CD4-positive, alpha-beta memory T cell (primary cell): ENCODE measurements at regions of chr20 and their contacts with region 1.

Region 1: DNA sequence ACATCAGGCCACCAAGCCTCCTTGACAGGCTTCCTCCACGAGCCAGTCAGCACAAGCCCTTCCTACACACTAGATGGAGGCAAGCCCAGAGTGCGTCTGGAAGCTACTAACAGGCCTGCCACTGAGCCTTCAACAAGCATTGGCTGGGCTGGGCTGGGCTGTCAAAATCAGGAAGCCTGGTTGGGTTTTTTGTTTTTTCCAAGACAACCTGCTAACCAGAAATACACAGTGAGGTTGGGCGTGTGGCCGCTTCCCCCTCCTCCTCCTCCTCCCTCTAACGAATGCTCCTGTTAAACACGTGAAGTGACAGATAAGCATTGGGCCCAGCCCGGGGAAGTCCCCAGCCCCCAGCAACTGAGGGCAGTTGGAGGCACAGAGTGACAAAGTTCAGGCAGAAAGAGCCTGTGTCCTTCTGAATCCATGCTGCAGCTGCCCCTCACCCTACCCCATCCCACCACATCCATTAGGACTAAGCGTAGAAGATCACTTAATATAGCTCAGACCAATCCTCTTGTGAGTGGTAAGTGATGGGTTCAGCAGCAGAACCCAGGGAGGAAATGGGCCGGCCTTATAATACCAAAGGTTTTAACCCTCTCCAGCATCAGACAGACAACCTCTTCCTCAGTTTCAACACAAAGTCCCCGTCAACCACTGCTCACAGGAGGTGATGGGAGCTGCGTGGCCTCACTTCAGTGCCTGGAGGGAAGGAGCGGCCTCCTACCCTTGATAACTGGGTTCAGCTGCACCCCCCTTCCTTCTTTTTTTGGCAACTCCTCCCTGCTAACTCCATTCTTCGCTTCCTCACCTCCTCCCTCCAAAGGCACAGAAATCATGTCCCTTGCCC is 1.1 kb downstream of the NFATC2 start:
- DNase-seq: peak; percentile 88 to 98 (median 91)
- H3K4me3 ChIP-seq: peak overlapping the region; percentile 72 to 85
- H3K4me3 Mint-ChIP-seq: peak overlapping the region; percentile 95 to 99 (median 98)
- H3K27ac ChIP-seq: peak overlapping the region; percentile 98
- H3K27ac Mint-ChIP-seq: peak overlapping the region; percentile 97 to 100 (median 98)
- H3K4me1 ChIP-seq: peaks cover 55% of the 10 kb centered on the region
- H3K4me1 Mint-ChIP-seq: peaks cover 43 to 65% (median 52%) of the 10 kb centered on the region in 4 donors
- H3K27me3 ChIP-seq: no peaks in the 10 kb centered on the region
- H3K27me3 Mint-ChIP-seq: no peaks in the 10 kb centered on the region

Region 2: GRCh38 chr20:51404298-51405060 is 136.9 kb before region 1 on chr20:
- CTCF ChIA-PET with region 1: interaction called, 8 read pairs
- POLR2A ChIA-PET with region 1: interaction called, 58 read pairs
- intact Hi-C with region 1: loop called (anchors 1 kb)
- DNase-seq: peak; percentile 86 to 98 (median 90)
- H3K4me3 ChIP-seq: no peak overlapping the region
- H3K4me3 Mint-ChIP-seq: peak overlapping the region in 7 of 8 donors; percentile 43 to 94 (median 78)
- H3K27ac ChIP-seq: peak overlapping the region; percentile 96
- H3K27ac Mint-ChIP-seq: peak overlapping the region; percentile 99 to 100 (median 100)
- H3K4me1 ChIP-seq: peaks cover 97% of the 10 kb centered on the region
- H3K4me1 Mint-ChIP-seq: peaks cover 64 to 92% (median 77%) of the 10 kb centered on the region in 4 donors
- H3K27me3 ChIP-seq: no peaks in the 10 kb centered on the region
- H3K27me3 Mint-ChIP-seq: no peaks in the 10 kb centered on the region

Region 3: GRCh38 chr20:51417250-51418136 is 123.9 kb before region 1 on chr20:
- CTCF ChIA-PET with region 1: interaction called, 4 read pairs
- POLR2A ChIA-PET with region 1: interaction called, 29 read pairs
- intact Hi-C with region 1: no loop called
- DNase-seq: peak; percentile 34 to 73 (median 44)
- H3K4me3 ChIP-seq: no peak overlapping the region
- H3K4me3 Mint-ChIP-seq: peak overlapping the region in 7 of 8 donors; percentile 54 to 84 (median 73)
- H3K27ac ChIP-seq: peak overlapping the region; percentile 65
- H3K27ac Mint-ChIP-seq: peak overlapping the region; percentile 87 to 97 (median 95)
- H3K4me1 ChIP-seq: peaks cover 85% of the 10 kb centered on the region
- H3K4me1 Mint-ChIP-seq: peaks cover 52 to 96% (median 71%) of the 10 kb centered on the region in 4 donors
- H3K27me3 ChIP-seq: no peaks in the 10 kb centered on the region
- H3K27me3 Mint-ChIP-seq: no peaks in the 10 kb centered on the region

Region 4: DNA sequence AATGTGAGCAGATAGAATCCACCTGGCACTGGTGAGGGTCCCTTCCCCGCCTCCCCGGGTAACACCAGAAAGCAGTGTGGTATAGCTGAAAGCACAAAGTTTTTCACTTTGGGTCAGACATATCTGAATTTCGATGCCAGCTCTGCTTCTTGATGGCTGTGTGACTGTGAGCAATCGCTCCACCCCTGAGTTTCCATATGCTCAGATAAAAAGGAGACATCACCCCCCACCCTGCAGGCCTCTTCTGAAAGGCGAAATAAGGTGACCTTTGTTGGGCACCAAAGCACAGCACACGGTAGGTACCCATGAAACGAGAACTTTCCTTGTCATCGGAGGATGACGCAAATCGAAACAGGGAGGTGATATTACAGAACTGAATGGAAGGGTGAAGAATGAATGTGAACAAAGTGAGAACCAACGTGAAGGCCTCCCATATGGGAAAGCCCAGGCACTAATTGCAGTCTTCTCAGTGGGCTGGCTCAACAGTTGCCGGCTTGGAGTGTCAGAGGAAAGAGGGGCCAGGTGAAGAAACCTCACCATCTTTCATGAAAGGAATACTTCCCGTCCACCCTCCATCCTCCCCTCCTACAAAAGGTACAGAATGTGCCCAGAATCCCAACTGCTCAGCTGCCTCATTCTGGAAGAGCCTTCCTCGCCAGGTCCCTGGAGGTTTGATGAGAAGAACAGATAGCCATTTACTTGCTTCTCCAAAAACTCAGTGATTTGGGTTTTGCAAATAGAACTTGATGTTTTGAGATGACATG is 60.7 kb before region 1 on chr20:
- CTCF ChIA-PET with region 1: no interaction called
- POLR2A ChIA-PET with region 1: interaction called, 19 read pairs
- intact Hi-C with region 1: loop called (anchors 1 kb)
- DNase-seq: peak in 4 of 5 donors; percentile 20 to 75 (median 30)
- H3K4me3 ChIP-seq: peak overlapping the region in 1 of 2 donors; percentile 0
- H3K4me3 Mint-ChIP-seq: peak overlapping the region; percentile 78 to 86 (median 80)
- H3K27ac ChIP-seq: peak overlapping the region; percentile 70
- H3K27ac Mint-ChIP-seq: peak overlapping the region; percentile 79 to 97 (median 92)
- H3K4me1 ChIP-seq: peaks cover 57% of the 10 kb centered on the region
- H3K4me1 Mint-ChIP-seq: peaks cover 62 to 92% (median 80%) of the 10 kb centered on the region in 4 donors
- H3K27me3 ChIP-seq: no peaks in the 10 kb centered on the region
- H3K27me3 Mint-ChIP-seq: no peaks in the 10 kb centered on the region

Region 5: DNA sequence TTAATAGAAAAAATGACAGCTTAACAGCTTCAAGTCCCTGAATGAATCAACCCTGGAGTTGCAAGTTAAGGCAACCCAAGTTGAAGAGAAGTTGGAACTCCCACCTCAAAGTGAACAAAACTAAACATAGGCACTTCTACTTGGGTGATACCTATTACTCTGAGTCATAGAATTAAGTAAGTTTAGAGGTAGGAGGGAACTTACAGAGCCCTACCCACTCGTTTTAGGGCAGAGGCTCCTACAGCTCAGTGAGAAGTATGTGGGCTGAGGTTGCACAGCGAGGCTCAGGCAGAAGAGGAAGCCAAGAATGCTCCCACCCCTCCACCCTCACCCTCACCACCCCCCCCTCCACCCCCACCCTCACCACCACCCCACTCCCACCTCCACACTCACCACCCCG is 41.1 kb before region 1 on chr20:
- CTCF ChIA-PET with region 1: interaction called, 7 read pairs
- POLR2A ChIA-PET with region 1: interaction called, 51 read pairs
- intact Hi-C with region 1: loop called (anchors 1 kb)
- DNase-seq: peak; percentile 55 to 85 (median 64)
- H3K4me3 ChIP-seq: no peak overlapping the region
- H3K4me3 Mint-ChIP-seq: peak overlapping the region in 5 of 8 donors; percentile 14 to 88 (median 62)
- H3K27ac ChIP-seq: peak overlapping the region; percentile 16
- H3K27ac Mint-ChIP-seq: peak overlapping the region; percentile 90 to 99 (median 97)
- H3K4me1 ChIP-seq: peaks cover 80% of the 10 kb centered on the region
- H3K4me1 Mint-ChIP-seq: peaks cover 70 to 88% (median 79%) of the 10 kb centered on the region in 4 donors
- H3K27me3 ChIP-seq: no peaks in the 10 kb centered on the region
- H3K27me3 Mint-ChIP-seq: no peaks in the 10 kb centered on the region

Region 6: GRCh38 chr20:51531141-51531710 is 10.2 kb before region 1 on chr20:
- CTCF ChIA-PET with region 1: interaction called, 4 read pairs
- POLR2A ChIA-PET with region 1: interaction called, 109 read pairs
- intact Hi-C with region 1: loop called (anchors 1 kb)
- DNase-seq: peak; percentile 41 to 94 (median 49)
- H3K4me3 ChIP-seq: no peak overlapping the region
- H3K4me3 Mint-ChIP-seq: peak overlapping the region; percentile 46 to 97 (median 76)
- H3K27ac ChIP-seq: peak overlapping the region; percentile 80
- H3K27ac Mint-ChIP-seq: peak overlapping the region; percentile 97 to 99 (median 98)
- H3K4me1 ChIP-seq: peaks cover 96% of the 10 kb centered on the region
- H3K4me1 Mint-ChIP-seq: peaks cover 74 to 100% (median 86%) of the 10 kb centered on the region in 4 donors
- H3K27me3 ChIP-seq: no peaks in the 10 kb centered on the region
- H3K27me3 Mint-ChIP-seq: no peaks in the 10 kb centered on the region